ENCODE measurements at regions of chr1 and their contacts with region 1.

Region 1: GRCh38 chr1:108746372-108747205 is at the start of gene STXBP3:
- DNase-seq: peak; percentile 99
- ATAC-seq: peak; percentile 94
- H3K4me3 ChIP-seq: peak within 1 kb of the TSS; percentile 81
- H3K27ac ChIP-seq: peak within 1 kb of the TSS; percentile 90
- H3K4me1 ChIP-seq: peaks cover 4 to 9% of the 10 kb centered on the region in 2 experiments; a peak in 4 of 5 replicates
- H3K27me3 ChIP-seq: no peaks in the 10 kb centered on the region
- CTCF ChIP-seq: peak; percentile 83 to 98 (median 94)
- EP300 ChIP-seq: peak; percentile 51
- POLR2A ChIP-seq: peak; percentile 99
- RAD21 ChIP-seq: peak; percentile 23 to 52
- polyA plus RNA-seq, gene STXBP3: 34.2 to 34.9 TPM

Region 2: DNA sequence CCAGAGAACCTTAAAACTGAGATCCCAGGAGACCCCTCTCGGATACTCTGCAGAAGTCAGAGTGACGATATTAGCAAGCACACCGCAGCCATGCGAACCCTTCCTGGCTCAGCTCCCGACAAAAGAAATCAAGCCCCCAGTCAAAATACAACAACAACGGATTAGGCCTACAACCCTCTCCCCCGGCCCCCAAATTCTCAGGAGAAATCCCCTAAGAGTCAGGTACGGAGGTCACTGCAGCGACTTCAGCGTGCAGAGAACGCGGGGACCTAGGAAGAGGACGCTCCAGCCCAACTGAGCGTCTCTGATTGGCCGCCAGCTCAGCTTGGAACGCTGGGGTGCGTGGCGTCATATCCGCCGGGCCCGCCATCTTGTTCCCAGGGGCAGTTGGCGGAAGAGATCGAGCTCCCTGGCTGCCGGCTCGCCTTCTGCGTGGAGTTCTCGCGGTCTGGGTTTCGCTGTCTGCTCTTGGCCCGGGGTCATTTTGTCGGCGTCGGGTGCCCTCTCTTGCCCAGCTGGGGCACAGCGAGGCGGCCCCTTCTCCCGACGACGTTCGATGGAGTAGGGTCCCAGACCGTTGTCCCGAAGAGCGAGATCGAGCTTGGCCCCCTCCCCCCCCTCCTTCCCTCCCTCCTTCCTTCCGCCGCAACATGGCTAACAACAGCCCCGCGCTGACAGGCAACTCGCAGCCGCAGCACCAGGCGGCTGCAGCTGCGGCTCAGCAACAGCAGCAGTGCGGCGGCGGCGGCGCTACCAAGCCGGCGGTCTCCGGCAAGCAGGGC is 54.5 kb before region 1 on chr1 and contains the start of gene PRPF38B:
- CTCF ChIA-PET with region 1: no interaction called
- POLR2A ChIA-PET with region 1: interaction called, 4 read pairs
- in situ Hi-C with region 1: no loop called
- intact Hi-C with region 1: loop called (anchors 2 kb)
- DNase-seq: peak; percentile 96 to 99 (median 98)
- ATAC-seq: peak; percentile 91
- H3K4me3 ChIP-seq: peak within 1 kb of the TSS; percentile 74
- H3K27ac ChIP-seq: peak within 1 kb of the TSS; percentile 94
- H3K4me1 ChIP-seq: peaks cover 5 to 7% of the 10 kb centered on the region in 2 experiments; a peak in 3 of 5 replicates
- H3K27me3 ChIP-seq: no peaks in the 10 kb centered on the region
- CTCF ChIP-seq: no peak
- EP300 ChIP-seq: 0 out of 2 replicates have a peak, but pooled peaks have one; percentile 10
- POLR2A ChIP-seq: peak; percentile 99
- RAD21 ChIP-seq: no peak
- polyA plus RNA-seq, gene PRPF38B: 25.3 to 34.3 TPM

Region 3: GRCh38 chr1:108799001-108799400 is 52.4 kb after region 1 on chr1:
- CTCF ChIA-PET with region 1: no interaction called
- POLR2A ChIA-PET with region 1: no interaction called
- in situ Hi-C with region 1: no loop called
- intact Hi-C with region 1: loop called (anchors 5 kb)
- DNase-seq: no peak
- ATAC-seq: no peak
- H3K4me3 ChIP-seq: no peak overlapping the region
- H3K27ac ChIP-seq: no peak overlapping the region
- H3K4me1 ChIP-seq: no peaks in the 10 kb centered on the region
- H3K27me3 ChIP-seq: no peaks in the 10 kb centered on the region
- CTCF ChIP-seq: no peak
- EP300 ChIP-seq: no peak
- POLR2A ChIP-seq: no peak
- RAD21 ChIP-seq: no peak

Region 4: GRCh38 chr1:108816049-108816893 is 69.7 kb after region 1 on chr1:
- CTCF ChIA-PET with region 1: no interaction called
- POLR2A ChIA-PET with region 1: no interaction called
- in situ Hi-C with region 1: no loop called
- intact Hi-C with region 1: loop called (anchors 5 kb)
- DNase-seq: peak; percentile 25 to 53 (median 35)
- ATAC-seq: peak; percentile 74
- H3K4me3 ChIP-seq: no peak overlapping the region
- H3K27ac ChIP-seq: no peak overlapping the region
- H3K4me1 ChIP-seq: peaks cover 0 to 14% of the 10 kb centered on the region in 2 experiments; a peak in 3 of 5 replicates
- H3K27me3 ChIP-seq: no peaks in the 10 kb centered on the region
- CTCF ChIP-seq: no peak
- EP300 ChIP-seq: no peak
- POLR2A ChIP-seq: no peak
- RAD21 ChIP-seq: no peak

Region 5: GRCh38 chr1:108877348-108878159 is 131.0 kb after region 1 on chr1:
- CTCF ChIA-PET with region 1: no interaction called
- POLR2A ChIA-PET with region 1: interaction called, 3 read pairs
- in situ Hi-C with region 1: no loop called
- intact Hi-C with region 1: loop called (anchors 5 kb)
- DNase-seq: peak in 1 of 4 experiments; percentile 47
- ATAC-seq: peak; percentile 29
- H3K4me3 ChIP-seq: peak overlapping the region; percentile 92
- H3K27ac ChIP-seq: peak overlapping the region; percentile 77
- H3K4me1 ChIP-seq: peaks cover 9 to 12% of the 10 kb centered on the region in 2 experiments; a peak in 4 of 5 replicates
- H3K27me3 ChIP-seq: no peaks in the 10 kb centered on the region
- CTCF ChIP-seq: no peak
- EP300 ChIP-seq: no peak
- POLR2A ChIP-seq: no peak
- RAD21 ChIP-seq: no peak

Measured in K562 (cell line).